ENCODE measurements at regions of chr5 and their contacts with region 1.

Region 1: GRCh38 chr5:134289509-134290113 is 63.7 kb upstream of the PPP2CA start:
- DNase-seq: peak in 1 of 2 donors; percentile 71
- ATAC-seq: peak; percentile 86 to 97 (median 94)
- H3K4me3 ChIP-seq: no peak overlapping the region
- H3K27ac ChIP-seq: no peak overlapping the region
- H3K4me1 ChIP-seq: peaks cover 0 to 3% (median 0%) of the 10 kb centered on the region in 9 donors
- H3K27me3 ChIP-seq: no peaks in the 10 kb centered on the region
- CTCF ChIP-seq: peak; percentile 39 to 89 (median 74)

Region 2: DNA sequence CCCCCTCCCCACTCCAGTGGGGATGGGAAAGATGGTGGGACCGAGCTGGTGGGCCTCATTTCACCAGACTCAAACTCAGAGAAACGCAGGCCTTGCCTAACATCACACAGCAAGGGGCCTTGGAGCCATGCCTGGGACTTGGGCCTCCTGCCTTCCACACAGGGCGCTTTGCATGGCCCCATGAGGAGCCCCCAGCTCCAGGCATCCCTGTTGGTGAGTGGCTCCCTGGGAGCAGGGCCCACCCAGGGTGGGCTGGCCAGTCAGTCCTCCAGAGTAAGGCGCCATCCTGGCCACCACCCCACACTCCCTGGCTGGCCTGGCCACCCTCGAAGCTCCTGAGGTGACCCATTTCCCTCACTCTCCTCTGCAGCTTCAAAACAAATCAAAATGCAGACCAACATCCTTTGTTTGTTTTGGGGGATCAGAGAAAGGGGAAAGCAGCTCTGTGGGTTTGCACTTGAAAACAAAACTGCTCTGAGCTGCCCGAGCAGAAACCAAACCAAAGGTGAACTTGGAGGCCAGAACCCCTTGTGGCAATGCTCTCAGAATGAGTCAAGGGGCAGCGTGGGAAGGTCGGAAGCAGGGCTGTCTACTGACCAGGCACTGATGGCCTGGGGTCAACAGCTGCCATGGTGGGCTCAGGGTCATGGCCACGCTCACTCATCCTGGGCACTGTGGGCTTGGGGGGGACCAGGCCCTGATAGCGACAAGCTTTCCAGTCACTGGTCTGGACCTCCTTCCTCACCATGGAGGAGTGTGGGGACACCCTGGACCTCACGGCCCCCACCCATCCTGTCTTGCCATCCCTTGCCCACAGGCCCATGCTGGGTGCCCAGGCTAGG is 247.8 kb before region 1 on chr5:
- intact Hi-C with region 1: loop called in 3 of 10 experiments (anchors 5 to 10 kb)
- DNase-seq: no peak
- ATAC-seq: peak in 1 of 8 donors; percentile 9
- H3K4me3 ChIP-seq: no peak overlapping the region
- H3K27ac ChIP-seq: no peak overlapping the region
- H3K4me1 ChIP-seq: no peaks in the 10 kb centered on the region
- H3K27me3 ChIP-seq: no peaks in the 10 kb centered on the region
- CTCF ChIP-seq: no peak

Region 3: DNA sequence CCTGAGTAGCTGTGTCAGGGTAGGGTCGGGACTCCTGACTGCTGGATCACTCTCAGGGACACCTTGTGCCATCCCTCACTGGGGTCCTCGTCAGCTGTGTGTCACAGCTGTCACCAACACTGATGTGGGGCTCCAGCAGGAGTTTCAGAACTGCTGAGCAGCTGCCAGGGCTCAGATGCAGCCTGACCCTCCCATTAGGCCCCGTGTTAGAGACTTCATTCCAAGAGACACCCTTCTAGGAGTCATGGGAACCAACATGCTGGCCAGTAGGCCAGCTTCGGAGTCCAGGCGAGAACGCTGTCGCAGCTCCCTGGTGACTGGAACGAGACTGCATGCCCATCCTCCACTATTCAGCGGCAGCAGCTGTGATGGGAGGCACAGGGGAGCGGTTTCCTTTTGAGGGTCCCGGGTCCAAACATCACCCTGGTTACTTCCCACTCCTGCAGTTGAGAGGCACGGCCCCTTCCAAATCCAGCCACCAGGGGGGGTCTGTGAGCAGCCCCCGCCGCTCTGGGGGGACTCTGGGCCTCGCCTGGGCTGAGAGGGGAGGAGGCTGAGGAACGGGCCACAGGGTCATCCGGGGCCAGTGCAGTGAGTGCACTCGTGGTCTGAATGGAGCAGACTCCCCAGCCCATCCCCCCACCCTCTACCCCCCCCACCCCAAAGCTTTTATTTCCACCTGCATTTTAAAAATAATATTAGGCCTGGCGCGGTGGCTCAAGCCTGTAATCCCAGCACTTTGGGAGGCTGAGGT is 187.7 kb before region 1 on chr5:
- intact Hi-C with region 1: loop called in 2 of 10 experiments (anchors 5 kb)
- DNase-seq: peak; percentile 46 to 76
- ATAC-seq: peak; percentile 63 to 88 (median 76)
- H3K4me3 ChIP-seq: no peak overlapping the region
- H3K27ac ChIP-seq: no peak overlapping the region
- H3K4me1 ChIP-seq: peaks cover 0 to 45% (median 14%) of the 10 kb centered on the region in 9 donors
- H3K27me3 ChIP-seq: no peaks in the 10 kb centered on the region
- CTCF ChIP-seq: peak; percentile 73 to 92 (median 90)

Region 4: DNA sequence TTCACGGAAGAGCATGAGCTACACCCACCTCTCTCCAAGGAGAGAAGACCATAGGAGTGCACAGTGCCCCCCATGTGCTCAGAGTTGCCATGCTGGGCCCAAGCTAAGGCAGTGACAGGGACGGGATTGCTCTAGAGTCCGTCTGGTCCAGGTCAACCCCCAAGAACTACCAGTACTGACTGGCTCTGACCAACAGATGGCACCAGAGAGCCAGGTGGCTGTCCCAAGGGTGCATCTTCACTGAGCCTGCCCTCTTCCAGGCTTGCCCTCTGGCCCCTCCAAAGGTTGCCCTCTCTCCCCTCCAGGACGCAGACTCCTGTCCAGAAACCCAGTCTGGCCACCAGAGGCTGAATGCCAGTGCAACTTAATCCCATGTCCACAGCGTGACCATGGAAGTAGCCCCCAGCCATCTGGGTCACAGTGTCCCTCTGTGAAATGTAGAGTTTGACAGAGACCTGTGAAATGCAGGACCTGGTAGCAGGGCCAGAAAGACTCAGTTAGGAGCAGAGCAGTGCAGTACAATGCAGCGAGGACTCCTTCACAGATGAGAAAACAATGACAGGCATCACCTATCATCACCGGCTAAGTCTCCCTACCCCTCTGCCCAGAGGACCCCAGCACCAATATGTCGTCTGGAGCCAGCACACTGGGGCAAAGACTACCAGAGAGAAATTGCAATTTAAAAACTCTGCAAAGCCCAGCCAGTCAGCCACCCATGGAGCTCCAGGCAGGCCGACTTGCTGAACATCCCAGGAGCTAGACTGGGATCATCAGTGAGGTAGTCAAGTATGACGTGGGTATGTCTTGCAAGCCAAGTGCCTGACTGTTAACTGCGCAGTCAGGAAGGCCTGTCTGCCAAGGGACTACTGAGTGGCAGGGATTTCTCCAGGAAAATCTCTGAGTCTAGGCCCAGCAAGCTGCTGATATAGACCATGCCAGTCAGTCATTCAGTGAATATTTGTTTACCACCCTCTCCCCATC is 105.2 kb before region 1 on chr5:
- intact Hi-C with region 1: loop called (anchors 1 to 2 kb)
- DNase-seq: peak; percentile 56 to 67
- ATAC-seq: peak; percentile 73 to 92 (median 87)
- H3K4me3 ChIP-seq: no peak overlapping the region
- H3K27ac ChIP-seq: no peak overlapping the region
- H3K4me1 ChIP-seq: peaks cover 0 to 17% (median 10%) of the 10 kb centered on the region in 9 donors
- H3K27me3 ChIP-seq: no peaks in the 10 kb centered on the region
- CTCF ChIP-seq: peak; percentile 86 to 98 (median 94)

Region 5: DNA sequence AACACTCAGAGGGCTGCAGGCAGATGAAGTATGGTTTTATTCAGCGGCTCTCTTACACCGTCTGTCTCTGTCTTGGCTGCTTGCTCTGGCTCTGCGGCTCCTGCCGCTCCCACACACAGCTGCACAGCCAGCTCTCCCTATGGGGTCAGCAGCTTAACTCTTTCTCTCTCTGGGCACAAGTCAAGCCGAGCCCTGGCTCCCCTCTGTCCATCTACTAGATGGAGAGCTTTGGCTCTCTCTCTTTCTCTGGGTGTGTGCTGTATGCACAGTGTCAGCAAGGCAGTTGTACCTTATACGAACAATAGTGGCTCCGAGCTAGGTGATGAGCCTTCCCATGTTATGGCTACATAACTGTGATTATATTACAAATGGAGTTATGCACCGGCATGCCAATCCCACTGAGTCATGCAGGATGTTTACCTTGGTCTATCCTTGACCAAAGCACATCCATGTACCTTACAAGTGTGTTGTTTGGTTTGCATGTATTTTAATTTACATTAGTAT is 44.5 kb before region 1 on chr5:
- intact Hi-C with region 1: loop called in 1 of 10 experiments (anchors 5 kb)
- DNase-seq: no peak
- ATAC-seq: peak; percentile 15 to 71 (median 36)
- H3K4me3 ChIP-seq: no peak overlapping the region
- H3K27ac ChIP-seq: peak overlapping the region in 8 of 10 donors; percentile 20 to 82 (median 68)
- H3K4me1 ChIP-seq: peaks cover 0 to 73% (median 38%) of the 10 kb centered on the region in 9 donors
- H3K27me3 ChIP-seq: no peaks in the 10 kb centered on the region
- CTCF ChIP-seq: no peak

Measured in heart right ventricle (tissue), 16 donors.